ENCODE measurements at regions of chr5 and their contacts with region 1.

Region 1: DNA sequence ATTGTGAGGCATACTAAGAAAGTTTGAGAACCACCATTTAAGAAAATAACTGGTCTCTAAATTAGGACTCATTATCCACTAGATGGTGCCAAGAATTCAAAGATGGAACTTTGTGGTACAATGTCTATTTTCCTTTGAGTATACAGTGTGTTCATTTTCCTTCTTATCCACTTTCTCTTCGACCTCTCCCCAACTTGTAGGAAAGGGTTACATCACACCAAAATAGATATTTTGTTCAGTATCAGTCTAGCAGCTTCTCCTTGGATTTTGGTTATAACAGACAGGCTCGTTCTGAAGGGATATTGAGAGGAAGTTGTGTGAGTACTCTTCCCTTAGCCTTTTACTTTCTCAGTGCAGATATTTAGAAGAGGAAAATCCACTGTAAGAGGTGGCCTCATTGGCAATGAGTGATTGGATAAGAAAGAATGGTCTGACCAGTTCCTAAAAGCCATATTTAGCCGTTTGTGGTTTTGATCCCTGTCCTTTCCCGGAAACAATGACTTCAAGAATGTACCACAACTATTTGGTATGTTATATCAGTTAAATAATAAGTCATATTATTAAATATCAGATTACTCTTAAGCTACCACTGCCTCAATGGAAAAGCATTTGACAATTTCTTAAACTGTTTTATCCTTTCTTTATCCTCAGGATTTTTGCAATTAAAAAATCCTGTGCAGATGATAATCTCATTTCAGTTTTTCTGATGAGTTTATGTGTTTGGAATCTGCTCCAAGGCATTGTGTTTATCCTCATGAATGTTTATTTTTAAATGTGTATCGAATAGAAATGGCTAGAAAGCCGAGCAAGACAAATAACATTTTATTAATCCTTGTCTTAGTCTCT is 69.0 kb upstream of the GRAMD2B start:
- H3K4me3 ChIP-seq: peak overlapping the region; percentile 17
- H3K27ac ChIP-seq: no peak overlapping the region
- H3K4me1 ChIP-seq: no peaks in the 10 kb centered on the region
- CTCF ChIP-seq: peak; percentile 54; the same call in 1 of the 2 replicates

Region 2: DNA sequence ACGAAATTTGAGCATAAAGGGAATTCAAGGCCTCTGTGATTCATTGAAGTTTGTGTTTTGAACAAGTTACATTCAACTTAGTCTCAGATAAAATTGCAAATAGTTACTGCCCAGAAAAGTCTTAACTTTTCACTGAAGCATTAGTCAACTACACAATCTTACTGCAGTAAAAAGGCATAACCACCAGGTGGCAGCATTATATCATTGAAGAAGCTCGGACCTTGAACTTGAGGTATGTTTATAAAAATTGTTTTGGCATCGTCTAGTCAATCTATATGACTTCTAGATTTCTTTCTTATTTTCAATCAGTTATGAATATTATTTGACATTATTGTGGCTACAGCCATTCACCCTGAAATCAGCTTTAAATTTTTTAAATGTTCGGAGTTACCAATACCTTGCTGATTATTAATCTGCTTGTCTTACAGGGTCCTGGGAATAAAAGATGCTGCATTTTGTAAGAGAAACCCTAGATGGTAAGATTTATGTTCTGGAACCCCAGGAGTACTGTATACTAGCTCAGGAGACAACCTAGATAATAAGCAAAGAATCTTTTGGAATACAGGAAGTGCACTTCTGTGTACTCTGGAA is 14.9 kb before region 1 on chr5:
- CTCF ChIA-PET with region 1: interaction called, 16 read pairs
- POLR2A ChIA-PET with region 1: no interaction called
- H3K4me3 ChIP-seq: no peak overlapping the region
- H3K27ac ChIP-seq: no peak overlapping the region
- H3K4me1 ChIP-seq: no peaks in the 10 kb centered on the region
- CTCF ChIP-seq: peak; percentile 36; the same call in 1 of the 2 replicates

Region 3: DNA sequence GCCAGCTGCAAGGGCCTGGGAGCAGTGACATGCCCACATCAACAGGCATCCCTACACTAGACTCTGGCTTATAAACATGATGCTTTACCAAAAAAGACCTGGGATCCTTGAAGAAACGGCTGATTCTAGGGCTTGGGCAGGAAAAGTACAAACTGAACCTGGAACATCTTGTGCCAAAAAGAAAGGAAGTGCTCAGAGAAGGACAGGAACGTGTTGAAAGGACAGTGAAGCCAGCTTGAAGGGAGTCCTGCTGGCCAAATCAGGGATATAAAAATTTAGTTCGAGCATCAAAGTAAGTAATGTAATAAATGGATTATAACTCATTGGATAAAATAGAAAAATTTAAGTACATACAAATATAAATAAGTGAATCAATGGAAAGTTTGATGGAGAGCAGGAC is 182.6 kb after region 1 on chr5:
- CTCF ChIA-PET with region 1: interaction called, 65 read pairs
- POLR2A ChIA-PET with region 1: no interaction called
- H3K4me3 ChIP-seq: no peak overlapping the region
- H3K27ac ChIP-seq: no peak overlapping the region
- H3K4me1 ChIP-seq: 0 out of 2 replicates have a peak, but pooled peaks cover 2% of the 10 kb centered on the region
- CTCF ChIP-seq: no peak

Region 4: DNA sequence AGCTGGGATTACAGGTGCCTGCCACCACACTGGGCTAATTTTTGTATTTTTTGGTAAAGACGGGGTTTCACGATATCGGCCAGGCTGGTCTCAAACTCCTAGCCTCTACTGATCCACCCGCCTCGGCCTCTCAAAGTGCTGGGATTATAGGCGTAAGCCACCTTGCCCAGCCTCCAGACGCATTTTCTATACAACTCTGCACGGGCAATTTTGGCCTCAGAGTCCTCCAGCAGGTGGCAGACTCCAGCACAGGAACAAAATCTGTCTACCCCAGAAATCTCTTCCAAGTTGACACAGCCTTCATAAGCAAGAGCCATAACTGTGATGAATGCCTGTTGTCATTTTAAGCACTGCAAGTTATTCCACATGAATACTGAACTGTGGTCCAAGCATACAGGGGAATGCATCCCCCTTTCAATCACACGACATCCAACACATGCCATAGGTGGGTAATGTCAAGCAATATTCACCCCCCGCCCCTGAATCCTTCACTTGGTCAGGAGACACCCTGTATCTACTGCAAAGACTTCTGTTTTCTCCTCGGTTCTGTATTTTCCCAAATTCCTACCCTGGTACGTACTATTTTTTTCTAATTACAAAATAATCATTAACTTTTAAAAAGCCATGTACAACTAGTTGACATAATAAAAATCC is 190.0 kb after region 1 on chr5:
- CTCF ChIA-PET with region 1: interaction called, 65 read pairs
- POLR2A ChIA-PET with region 1: no interaction called
- H3K4me3 ChIP-seq: no peak overlapping the region
- H3K27ac ChIP-seq: no peak overlapping the region
- H3K4me1 ChIP-seq: no peaks in the 10 kb centered on the region
- CTCF ChIP-seq: no peak; the same call in 1 of the 2 replicates

Region 5: GRCh38 chr5:126594676-126595485 is 240.6 kb after region 1 on chr5 and contains the start of gene ALDH7A1:
- CTCF ChIA-PET with region 1: interaction called, 16 read pairs
- POLR2A ChIA-PET with region 1: no interaction called
- H3K4me3 ChIP-seq: peak within 1 kb of the TSS; percentile 79
- H3K27ac ChIP-seq: peak within 1 kb of the TSS; percentile 89
- H3K4me1 ChIP-seq: peaks cover 6% of the 10 kb centered on the region
- CTCF ChIP-seq: peak; percentile 77

Measured in HEK293 (cell line).